ENCODE measurements at regions of chr22 and their contacts with region 1.

Region 1: GRCh38 chr22:35582861-35583670 is 34.1 kb downstream of the MB start:
- DNase-seq: peak; percentile 43 to 66 (median 55)
- H3K4me3 ChIP-seq: no peak overlapping the region
- H3K4me3 Mint-ChIP-seq: no peak overlapping the region
- H3K27ac ChIP-seq: no peak overlapping the region
- H3K27ac Mint-ChIP-seq: peak overlapping the region in 1 of 7 donors; percentile 69
- H3K4me1 ChIP-seq: no peaks in the 10 kb centered on the region
- H3K4me1 Mint-ChIP-seq: peaks cover 3% of the 10 kb centered on the region
- H3K27me3 ChIP-seq: no peaks in the 10 kb centered on the region
- H3K27me3 Mint-ChIP-seq: peaks cover 4 to 12% (median 7%) of the 10 kb centered on the region in 3 donors
- CTCF ChIP-seq: peak; percentile 99

Region 2: DNA sequence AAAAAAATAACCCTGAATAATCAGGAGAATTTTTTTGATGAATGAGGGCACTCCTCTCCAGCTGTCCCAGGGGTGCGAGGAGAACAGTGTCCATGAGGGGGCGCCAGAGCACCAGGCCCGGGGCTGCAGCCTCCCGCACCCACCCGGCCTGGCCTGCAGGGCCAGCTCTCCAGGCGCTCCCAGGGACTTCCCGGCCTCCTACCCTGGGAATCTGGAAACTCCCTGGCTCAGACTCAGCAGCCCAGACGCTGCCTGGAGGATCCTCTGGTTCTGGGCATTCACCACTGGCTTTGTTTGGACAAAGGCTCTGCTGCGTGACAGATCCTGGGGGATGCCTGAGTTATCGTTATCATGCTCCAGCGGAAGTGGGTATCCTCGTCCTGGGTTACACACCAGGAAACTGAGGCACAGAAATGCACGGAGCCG is 152.2 kb before region 1 on chr22:
- intact Hi-C with region 1: loop called (anchors 5 kb)
- DNase-seq: peak; percentile 48 to 76 (median 50)
- H3K4me3 ChIP-seq: no peak overlapping the region
- H3K4me3 Mint-ChIP-seq: no peak overlapping the region
- H3K27ac ChIP-seq: no peak overlapping the region
- H3K27ac Mint-ChIP-seq: peak overlapping the region in 1 of 7 donors; percentile 40
- H3K4me1 ChIP-seq: no peaks in the 10 kb centered on the region
- H3K4me1 Mint-ChIP-seq: no peaks in the 10 kb centered on the region
- H3K27me3 ChIP-seq: no peaks in the 10 kb centered on the region
- H3K27me3 Mint-ChIP-seq: peaks cover 0 to 2% (median 0%) of the 10 kb centered on the region in 3 donors
- CTCF ChIP-seq: peak; percentile 89

Region 3: GRCh38 chr22:35524966-35525686 is 57.9 kb before region 1 on chr22:
- intact Hi-C with region 1: no loop called
- DNase-seq: no peak
- H3K4me3 ChIP-seq: no peak overlapping the region
- H3K4me3 Mint-ChIP-seq: no peak overlapping the region
- H3K27ac ChIP-seq: no peak overlapping the region
- H3K27ac Mint-ChIP-seq: no peak overlapping the region
- H3K4me1 ChIP-seq: peaks cover 10 to 13% of the 10 kb centered on the region in 2 donors
- H3K4me1 Mint-ChIP-seq: peaks cover 13% of the 10 kb centered on the region
- H3K27me3 ChIP-seq: peaks cover 0 to 9% of the 10 kb centered on the region in 2 donors
- H3K27me3 Mint-ChIP-seq: peaks cover 6 to 14% (median 7%) of the 10 kb centered on the region in 3 donors
- CTCF ChIP-seq: no peak